Colonic mucosa (tissue), 4 donors: ENCODE measurements at regions of chr2 and their contacts with region 1.

Region 1: GRCh38 chr2:169694904-169695260 is 613 bp downstream of the PHOSPHO2 start:
- DNase-seq: no peak
- H3K4me3 ChIP-seq: peak overlapping the region; percentile 68
- H3K27ac ChIP-seq: peak overlapping the region; percentile 84
- H3K4me1 ChIP-seq: peaks cover 4% of the 10 kb centered on the region
- H3K27me3 ChIP-seq: no peaks in the 10 kb centered on the region
- CTCF ChIP-seq: no peak

Region 2: DNA sequence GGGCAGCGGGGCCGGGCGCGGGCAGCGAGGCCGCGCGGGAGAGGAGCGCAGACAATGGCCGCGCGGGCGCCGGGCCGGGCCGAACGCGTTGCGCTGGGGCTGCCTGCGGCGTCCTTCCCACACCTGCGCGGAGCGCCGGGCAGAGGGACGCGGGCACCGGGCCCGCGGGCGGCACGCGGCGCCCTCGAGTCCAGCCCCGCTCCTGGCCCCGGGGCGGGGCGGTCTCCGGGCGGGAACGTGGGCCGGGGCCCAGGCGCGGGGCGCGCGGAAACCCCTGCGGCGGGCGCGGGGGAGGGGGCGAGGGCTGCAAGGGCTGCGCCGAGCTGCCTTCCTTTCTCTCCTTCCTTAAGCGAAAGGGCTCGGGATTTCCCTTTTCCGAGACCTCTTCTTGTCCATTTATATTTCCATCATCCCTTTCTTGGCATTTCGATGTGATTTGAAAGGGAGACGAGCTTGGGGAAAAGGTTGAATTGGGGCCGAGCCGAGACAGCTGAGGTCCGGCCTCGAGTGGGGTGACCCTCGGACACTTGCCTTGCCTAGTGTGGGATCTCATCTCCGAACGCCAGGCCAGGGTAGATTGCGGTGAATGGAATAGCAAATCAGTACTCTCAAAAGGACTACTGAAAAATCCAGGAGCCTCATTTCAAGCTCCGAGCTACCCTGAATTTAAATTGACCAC is 39.4 kb after region 1 on chr2:
- intact Hi-C with region 1: loop called (anchors 5 kb)
- DNase-seq: peak; percentile 31
- H3K4me3 ChIP-seq: peak overlapping the region; percentile 81
- H3K27ac ChIP-seq: no peak overlapping the region
- H3K4me1 ChIP-seq: no peaks in the 10 kb centered on the region
- H3K27me3 ChIP-seq: no peaks in the 10 kb centered on the region
- CTCF ChIP-seq: no peak

Region 3: GRCh38 chr2:169767243-169767888 is 72.5 kb after region 1 on chr2:
- intact Hi-C with region 1: no loop called
- DNase-seq: peak; percentile 77
- H3K4me3 ChIP-seq: no peak overlapping the region
- H3K27ac ChIP-seq: no peak overlapping the region
- H3K4me1 ChIP-seq: peaks cover 6% of the 10 kb centered on the region
- H3K27me3 ChIP-seq: peaks cover 13% of the 10 kb centered on the region
- CTCF ChIP-seq: peak; percentile 65